Mucosa of descending colon (tissue), 3 donors: ENCODE measurements at regions of chr18 and their contacts with region 1.

Region 1: GRCh38 chr18:55234366-55235093 is 275.3 kb upstream of the CCDC68 start:
- DNase-seq: peak in 2 of 3 donors; percentile 73 to 91
- ATAC-seq: peak; percentile 88
- H3K4me3 ChIP-seq: no peak overlapping the region
- H3K4me1 ChIP-seq: peaks cover 4% of the 10 kb centered on the region
- CTCF ChIP-seq: peak; percentile 40

Region 2: GRCh38 chr18:54743605-54743995 is 490.9 kb before region 1 on chr18:
- intact Hi-C with region 1: no loop called
- DNase-seq: no peak
- ATAC-seq: no peak
- H3K4me3 ChIP-seq: no peak overlapping the region
- H3K4me1 ChIP-seq: no peaks in the 10 kb centered on the region
- CTCF ChIP-seq: no peak

Region 3: DNA sequence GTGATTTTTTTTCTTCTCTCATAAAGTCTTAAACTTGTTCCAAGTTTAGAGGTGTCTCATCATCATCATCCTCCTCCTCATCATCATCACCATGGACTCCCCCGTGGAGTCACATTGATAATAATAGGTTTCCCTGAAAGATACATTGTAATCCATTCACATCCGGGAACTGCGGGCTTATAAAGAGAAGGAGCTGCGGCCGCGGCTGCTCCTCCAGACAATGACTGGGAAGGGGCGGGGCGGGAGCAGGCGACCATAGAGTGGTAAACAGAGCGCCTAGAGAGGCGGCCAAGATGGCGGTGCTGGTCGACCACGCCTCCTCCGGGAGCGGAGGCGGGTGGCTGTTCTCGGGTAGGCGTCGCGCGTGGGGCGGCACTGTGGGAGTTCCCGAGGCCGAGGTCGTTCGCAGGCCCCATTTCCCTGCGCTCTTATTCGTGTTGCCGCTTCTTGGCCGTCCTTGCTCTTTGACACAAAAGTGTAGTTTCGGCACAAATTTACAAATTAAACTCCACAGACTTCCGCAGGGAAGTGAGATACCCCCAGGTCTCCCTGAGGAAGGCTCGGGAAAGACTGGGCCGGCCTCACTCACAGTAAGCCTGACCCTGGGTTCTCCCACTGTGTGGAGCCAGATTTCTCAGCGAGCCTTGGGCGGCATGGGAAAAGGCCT is 355.2 kb after region 1 on chr18:
- intact Hi-C with region 1: loop called in 1 of 2 experiments (anchors 5 kb)
- DNase-seq: peak; percentile 91 to 95 (median 91)
- ATAC-seq: peak; percentile 97
- H3K4me3 ChIP-seq: peak overlapping the region; percentile 3
- H3K4me1 ChIP-seq: no peaks in the 10 kb centered on the region
- CTCF ChIP-seq: no peak

Region 4: GRCh38 chr18:56593906-56594305 is 1359.4 kb after region 1 on chr18:
- intact Hi-C with region 1: loop called in 1 of 2 experiments (anchors 5 kb)
- DNase-seq: no peak
- ATAC-seq: no peak
- H3K4me3 ChIP-seq: no peak overlapping the region
- H3K4me1 ChIP-seq: no peaks in the 10 kb centered on the region
- CTCF ChIP-seq: no peak